GM12878 (cell line): ENCODE measurements at regions of chr17 and their contacts with region 1.

Region 1: GRCh38 chr17:67784364-67785121 is 40.8 kb upstream of the BPTF start:
- DNase-seq: no peak
- ATAC-seq: peak; percentile 83
- H3K4me3 ChIP-seq: no peak overlapping the region
- H3K27ac ChIP-seq: no peak overlapping the region
- H3K4me1 ChIP-seq: peaks cover 5% of the 10 kb centered on the region; the same call in 1 of the 2 replicates
- H3K27me3 ChIP-seq: no peaks in the 10 kb centered on the region
- CTCF ChIP-seq: no peak
- EP300 ChIP-seq: no peak
- POLR2A ChIP-seq: no peak
- RAD21 ChIP-seq: no peak

Region 2: DNA sequence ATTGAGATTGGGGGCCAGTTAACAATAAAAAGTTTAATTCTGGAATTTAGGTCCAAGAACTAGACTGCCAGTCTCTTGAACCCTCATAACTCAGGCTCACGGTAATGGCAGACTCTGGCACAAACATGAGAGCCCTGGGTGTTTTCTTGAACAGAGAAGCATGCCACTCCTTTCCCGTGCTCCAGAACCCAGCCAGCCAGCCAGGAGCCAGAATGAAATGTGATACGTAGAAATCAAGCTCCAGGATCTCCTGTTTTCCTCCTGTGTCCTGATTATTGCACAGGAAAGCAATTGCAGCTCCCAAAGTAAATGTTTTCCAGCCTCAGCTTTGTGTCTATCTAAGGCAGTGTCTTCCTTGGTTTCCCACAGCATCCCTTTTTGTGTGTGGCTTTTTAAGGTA is 113.1 kb before region 1 on chr17:
- CTCF ChIA-PET with region 1: no interaction called
- POLR2A ChIA-PET with region 1: no interaction called
- RAD21 ChIA-PET with region 1: no interaction called
- SMC1A ChIA-PET with region 1: no interaction called
- in situ Hi-C with region 1: no loop called
- intact Hi-C with region 1: no loop called
- DNase-seq: no peak
- ATAC-seq: no peak
- H3K4me3 ChIP-seq: no peak overlapping the region
- H3K27ac ChIP-seq: no peak overlapping the region
- H3K4me1 ChIP-seq: peaks cover 7% of the 10 kb centered on the region; the same call in 1 of the 2 replicates
- H3K27me3 ChIP-seq: no peaks in the 10 kb centered on the region
- CTCF ChIP-seq: no peak
- EP300 ChIP-seq: no peak
- POLR2A ChIP-seq: no peak
- RAD21 ChIP-seq: no peak

Region 3: DNA sequence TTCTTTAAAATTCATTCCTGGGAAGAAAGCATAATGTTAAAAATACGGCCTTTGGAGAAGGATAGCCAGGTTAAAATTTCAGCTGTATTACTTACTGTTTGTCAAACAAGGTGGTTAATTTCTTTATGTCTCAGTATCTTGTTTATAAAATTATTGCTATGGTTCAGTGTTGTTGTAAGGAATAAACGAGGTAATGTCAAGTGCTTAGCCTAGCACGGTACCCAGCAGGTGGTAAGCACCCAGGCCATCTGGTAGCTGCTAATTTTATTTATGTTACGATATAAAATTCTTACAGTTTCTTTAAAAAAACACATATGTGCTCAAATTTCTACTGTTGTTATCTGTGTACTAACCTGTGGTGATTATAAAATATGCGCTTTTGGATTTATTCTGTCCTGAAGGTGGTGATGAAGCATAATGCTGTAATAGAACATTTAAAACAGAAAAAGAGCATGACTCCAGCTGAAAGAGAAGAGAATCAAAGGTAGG is 162.8 kb after region 1 on chr17:
- CTCF ChIA-PET with region 1: no interaction called
- POLR2A ChIA-PET with region 1: interaction called, 11 read pairs
- RAD21 ChIA-PET with region 1: no interaction called
- SMC1A ChIA-PET with region 1: no interaction called
- in situ Hi-C with region 1: no loop called
- intact Hi-C with region 1: no loop called
- DNase-seq: no peak
- ATAC-seq: no peak
- H3K4me3 ChIP-seq: no peak overlapping the region
- H3K27ac ChIP-seq: no peak overlapping the region
- H3K4me1 ChIP-seq: no peaks in the 10 kb centered on the region
- H3K27me3 ChIP-seq: no peaks in the 10 kb centered on the region
- CTCF ChIP-seq: no peak
- EP300 ChIP-seq: no peak
- POLR2A ChIP-seq: no peak
- RAD21 ChIP-seq: no peak